HepG2 (cell line): ENCODE measurements at regions of chr17 and their contacts with region 1.

Region 1: DNA sequence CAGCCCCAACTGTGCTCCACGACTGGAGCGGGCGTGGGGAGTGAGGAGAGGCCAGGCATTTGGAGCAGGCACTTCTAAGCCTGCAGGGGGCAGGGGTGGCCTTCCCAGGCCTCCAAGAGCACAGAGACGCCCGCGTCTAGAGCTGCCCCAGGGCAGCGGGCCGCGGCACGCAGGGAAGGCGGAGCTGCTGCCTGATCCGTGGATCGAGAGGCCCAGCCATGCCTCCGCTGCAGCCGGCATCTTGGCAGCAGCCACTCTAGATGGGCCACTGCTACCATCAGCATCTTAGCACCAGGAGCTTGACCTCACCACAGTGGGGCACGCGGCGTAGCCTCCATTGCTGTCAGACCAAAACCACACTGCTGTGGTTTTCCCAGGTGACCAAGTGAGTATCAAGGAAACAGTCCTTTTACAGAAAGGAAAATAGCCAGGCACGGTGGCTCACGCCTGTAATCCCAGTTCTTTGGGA is 20.4 kb upstream of the WDR45B start:
- DNase-seq: peak; percentile 78
- ATAC-seq: peak; percentile 99
- H3K4me3 ChIP-seq: peak overlapping the region in 1 of 3 experiments; percentile 46; a peak in 3 of 6 replicates
- H3K27ac ChIP-seq: no peak overlapping the region
- H3K4me1 ChIP-seq: peaks cover 17% of the 10 kb centered on the region
- H3K27me3 ChIP-seq: no peaks in the 10 kb centered on the region
- CTCF ChIP-seq: peak; percentile 96
- EP300 ChIP-seq: no peak
- POLR2A ChIP-seq: peak in 1 of 2 experiments; percentile 26; a peak in 1 of 4 replicates
- RAD21 ChIP-seq: peak; percentile 99

Region 2: DNA sequence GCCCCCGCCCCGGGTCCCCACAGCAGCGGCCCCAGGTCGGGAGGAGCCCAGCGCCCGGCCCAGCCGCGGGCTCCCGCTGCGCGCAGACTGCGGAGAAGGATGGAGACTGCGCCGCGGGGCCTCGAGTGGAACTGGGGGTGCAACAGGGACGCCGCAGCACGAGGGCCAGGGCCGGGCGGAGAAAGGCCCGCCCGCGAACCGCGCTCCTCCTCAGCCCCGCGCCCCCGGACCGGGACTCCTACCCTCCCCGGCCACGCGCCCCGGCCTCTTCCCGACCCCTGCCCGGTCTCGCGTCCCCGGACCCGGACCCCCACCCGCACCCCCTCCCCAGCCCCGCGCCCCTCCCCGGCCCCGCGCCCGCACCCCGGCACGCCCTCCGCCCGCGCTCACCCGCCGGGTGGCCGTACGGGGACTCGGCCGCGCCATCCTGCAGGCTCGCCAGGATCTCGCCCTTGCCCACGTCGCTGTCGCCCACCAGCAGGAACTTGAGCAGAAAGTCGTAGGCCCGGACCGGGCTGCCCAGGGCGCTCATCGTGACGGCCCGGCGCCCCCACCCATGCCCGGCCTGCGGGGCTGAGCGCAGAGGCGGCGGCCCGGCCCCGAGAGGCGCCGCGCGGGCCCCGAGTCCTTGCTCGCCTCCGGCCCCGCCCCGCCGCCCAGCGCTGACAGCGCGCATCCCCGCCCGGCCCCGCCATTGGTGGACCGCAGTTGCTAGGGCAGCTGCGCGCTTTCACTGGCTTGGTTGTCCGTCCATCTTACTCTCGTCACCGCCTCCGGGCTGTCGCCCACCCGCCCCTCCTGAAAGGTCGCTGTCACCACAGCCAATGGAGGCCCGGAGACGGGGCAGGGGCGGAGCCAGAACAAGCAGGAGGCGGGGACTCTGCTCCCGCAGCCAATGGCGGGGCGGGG is 29.7 kb after region 1 on chr17 and contains the start of gene RAB40B:
- CTCF ChIA-PET with region 1: no interaction called
- POLR2A ChIA-PET with region 1: no interaction called
- in situ Hi-C with region 1: no loop called
- intact Hi-C with region 1: no loop called
- DNase-seq: peak; percentile 96
- ATAC-seq: peak; percentile 92
- H3K4me3 ChIP-seq: peak within 1 kb of the TSS; percentile 64 to 85 (median 82)
- H3K27ac ChIP-seq: no peak within 1 kb of the TSS
- H3K4me1 ChIP-seq: peaks cover 54% of the 10 kb centered on the region
- H3K27me3 ChIP-seq: peaks cover 0 to 11% of the 10 kb centered on the region in 2 experiments; a peak in 1 of 5 replicates
- CTCF ChIP-seq: no peak; the same call in 1 of the 2 replicates
- EP300 ChIP-seq: peak in 1 of 2 experiments; percentile 59; a peak in 2 of 4 replicates
- POLR2A ChIP-seq: no peak
- RAD21 ChIP-seq: no peak
- total RNA-seq, gene RAB40B: 4.4 and 6.2 TPM in 2 replicates

Region 3: GRCh38 chr17:82767041-82767754 is 98.5 kb after region 1 on chr17:
- CTCF ChIA-PET with region 1: interaction called, 26 read pairs
- POLR2A ChIA-PET with region 1: no interaction called
- in situ Hi-C with region 1: no loop called
- intact Hi-C with region 1: loop called (anchors 1 kb)
- DNase-seq: peak; percentile 49
- ATAC-seq: peak; percentile 81
- H3K4me3 ChIP-seq: no peak overlapping the region
- H3K27ac ChIP-seq: no peak overlapping the region
- H3K4me1 ChIP-seq: no peaks in the 10 kb centered on the region
- H3K27me3 ChIP-seq: no peaks in the 10 kb centered on the region
- CTCF ChIP-seq: peak; percentile 85
- EP300 ChIP-seq: no peak
- POLR2A ChIP-seq: no peak
- RAD21 ChIP-seq: peak; percentile 90

Region 4: DNA sequence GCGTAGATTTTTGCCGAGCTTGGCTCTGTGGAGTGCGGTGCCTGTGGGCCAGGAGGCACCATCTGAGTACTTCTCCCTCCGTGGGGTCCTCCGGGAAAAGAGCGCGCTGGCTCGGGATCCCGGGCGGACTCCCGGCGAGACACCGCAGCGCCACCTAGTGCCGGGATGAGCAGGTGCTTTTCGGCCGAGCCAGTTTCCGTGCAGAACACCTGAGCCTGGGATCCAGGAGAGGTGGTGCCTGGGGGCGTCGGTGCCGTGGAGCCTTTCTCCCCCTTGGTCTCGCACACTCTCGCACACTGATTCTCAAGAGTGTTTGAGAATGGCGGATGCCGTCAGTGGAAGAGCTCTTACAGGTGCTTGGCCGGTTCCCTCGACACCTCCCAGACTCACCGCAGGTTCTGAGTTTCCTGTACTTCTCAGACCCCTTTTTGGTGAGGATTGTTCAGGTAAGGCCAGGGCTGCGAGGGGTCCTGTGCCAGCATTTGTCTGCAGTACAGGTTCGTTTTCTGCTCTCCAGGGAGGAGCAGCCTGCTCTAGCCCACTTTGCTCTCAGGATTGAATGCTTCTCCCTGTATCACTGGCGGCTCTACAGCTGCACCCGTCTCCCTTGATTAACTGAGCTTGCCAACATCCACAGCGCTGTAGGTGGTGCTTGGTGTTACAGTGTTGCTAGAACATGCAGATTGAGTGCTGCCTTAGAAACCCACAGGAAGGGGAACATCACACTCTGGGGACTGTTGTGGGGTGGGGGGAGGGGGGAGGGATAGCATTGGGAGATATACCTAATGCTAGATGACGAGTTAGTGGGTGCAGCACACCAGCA is 106.5 kb after region 1 on chr17:
- CTCF ChIA-PET with region 1: interaction called, 18 read pairs
- POLR2A ChIA-PET with region 1: no interaction called
- in situ Hi-C with region 1: loop called (anchors 5 kb)
- intact Hi-C with region 1: loop called (anchors 1 kb)
- DNase-seq: peak; percentile 51
- ATAC-seq: peak; percentile 85
- H3K4me3 ChIP-seq: no peak overlapping the region
- H3K27ac ChIP-seq: no peak overlapping the region
- H3K4me1 ChIP-seq: peaks cover 5% of the 10 kb centered on the region
- H3K27me3 ChIP-seq: no peaks in the 10 kb centered on the region
- CTCF ChIP-seq: peak; percentile 99
- EP300 ChIP-seq: no peak
- POLR2A ChIP-seq: no peak
- RAD21 ChIP-seq: peak; percentile 88